GM12878 (cell line): ENCODE measurements at regions of chr14 and their contacts with region 1.

Region 1: GRCh38 chr14:88189417-88190191 is 133.5 kb downstream of the KCNK10 start:
- DNase-seq: peak; percentile 25
- ATAC-seq: peak; percentile 96
- H3K4me3 ChIP-seq: no peak overlapping the region
- H3K27ac ChIP-seq: no peak overlapping the region
- H3K4me1 ChIP-seq: peaks cover 10% of the 10 kb centered on the region; the same call in 1 of the 2 replicates
- H3K27me3 ChIP-seq: no peaks in the 10 kb centered on the region; a peak in 1 of 4 replicates
- CTCF ChIP-seq: peak; percentile 64 to 75 (median 69)
- EP300 ChIP-seq: no peak
- POLR2A ChIP-seq: no peak
- RAD21 ChIP-seq: peak; percentile 82

Region 2: GRCh38 chr14:87952307-87953094 is 237.1 kb before region 1 on chr14:
- CTCF ChIA-PET with region 1: interaction called, 10 read pairs
- POLR2A ChIA-PET with region 1: no interaction called
- RAD21 ChIA-PET with region 1: interaction called, 29 read pairs
- SMC1A ChIA-PET with region 1: interaction called, 49 read pairs
- in situ Hi-C with region 1: loop called (anchors 10 kb)
- intact Hi-C with region 1: loop called (anchors 5 kb)
- DNase-seq: no peak
- ATAC-seq: peak; percentile 88
- H3K4me3 ChIP-seq: no peak overlapping the region
- H3K27ac ChIP-seq: no peak overlapping the region; the same call in 1 of the 2 replicates
- H3K4me1 ChIP-seq: peaks cover 4% of the 10 kb centered on the region
- H3K27me3 ChIP-seq: no peaks in the 10 kb centered on the region
- CTCF ChIP-seq: no peak
- EP300 ChIP-seq: no peak
- POLR2A ChIP-seq: no peak
- RAD21 ChIP-seq: no peak

Region 3: GRCh38 chr14:88168498-88169165 is 21.0 kb before region 1 on chr14:
- CTCF ChIA-PET with region 1: interaction called, 17 read pairs
- POLR2A ChIA-PET with region 1: no interaction called
- RAD21 ChIA-PET with region 1: interaction called, 3 read pairs
- SMC1A ChIA-PET with region 1: interaction called, 3 read pairs
- in situ Hi-C with region 1: no loop called
- intact Hi-C with region 1: no loop called
- DNase-seq: no peak
- ATAC-seq: peak; percentile 98
- H3K4me3 ChIP-seq: no peak overlapping the region
- H3K27ac ChIP-seq: no peak overlapping the region
- H3K4me1 ChIP-seq: peaks cover 5% of the 10 kb centered on the region
- H3K27me3 ChIP-seq: no peaks in the 10 kb centered on the region
- CTCF ChIP-seq: peak; percentile 76 to 87 (median 76)
- EP300 ChIP-seq: no peak
- POLR2A ChIP-seq: no peak
- RAD21 ChIP-seq: peak; percentile 74

Region 4: DNA sequence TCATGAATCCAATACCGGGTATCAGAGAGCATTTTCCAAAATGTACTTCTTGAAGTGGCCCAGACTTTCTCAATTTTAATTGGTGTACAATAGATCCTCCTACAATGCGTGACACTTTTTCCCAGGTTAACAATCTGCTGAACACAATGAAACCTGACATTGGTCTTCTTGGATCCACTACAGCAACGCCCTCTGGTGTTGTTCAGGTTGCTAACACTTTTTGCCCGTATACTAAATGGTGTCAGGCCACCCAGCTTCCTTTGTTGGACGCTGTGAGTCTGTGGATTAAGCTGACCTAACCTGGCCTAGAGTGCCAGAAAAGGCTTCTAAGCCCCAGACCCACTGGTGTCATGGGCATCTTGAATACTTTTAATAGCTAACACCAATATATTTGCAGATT is 44.3 kb after region 1 on chr14:
- CTCF ChIA-PET with region 1: interaction called, 23 read pairs
- POLR2A ChIA-PET with region 1: no interaction called
- RAD21 ChIA-PET with region 1: interaction called, 9 read pairs
- SMC1A ChIA-PET with region 1: interaction called, 23 read pairs
- in situ Hi-C with region 1: no loop called
- intact Hi-C with region 1: loop called (anchors 2 kb)
- DNase-seq: no peak
- ATAC-seq: peak; percentile 64
- H3K4me3 ChIP-seq: no peak overlapping the region
- H3K27ac ChIP-seq: no peak overlapping the region
- H3K4me1 ChIP-seq: no peaks in the 10 kb centered on the region
- H3K27me3 ChIP-seq: no peaks in the 10 kb centered on the region
- CTCF ChIP-seq: peak; percentile 40 to 52 (median 48); a peak in 4 of 6 replicates
- EP300 ChIP-seq: no peak
- POLR2A ChIP-seq: no peak
- RAD21 ChIP-seq: peak; percentile 40; the same call in 1 of the 2 replicates

Region 5: DNA sequence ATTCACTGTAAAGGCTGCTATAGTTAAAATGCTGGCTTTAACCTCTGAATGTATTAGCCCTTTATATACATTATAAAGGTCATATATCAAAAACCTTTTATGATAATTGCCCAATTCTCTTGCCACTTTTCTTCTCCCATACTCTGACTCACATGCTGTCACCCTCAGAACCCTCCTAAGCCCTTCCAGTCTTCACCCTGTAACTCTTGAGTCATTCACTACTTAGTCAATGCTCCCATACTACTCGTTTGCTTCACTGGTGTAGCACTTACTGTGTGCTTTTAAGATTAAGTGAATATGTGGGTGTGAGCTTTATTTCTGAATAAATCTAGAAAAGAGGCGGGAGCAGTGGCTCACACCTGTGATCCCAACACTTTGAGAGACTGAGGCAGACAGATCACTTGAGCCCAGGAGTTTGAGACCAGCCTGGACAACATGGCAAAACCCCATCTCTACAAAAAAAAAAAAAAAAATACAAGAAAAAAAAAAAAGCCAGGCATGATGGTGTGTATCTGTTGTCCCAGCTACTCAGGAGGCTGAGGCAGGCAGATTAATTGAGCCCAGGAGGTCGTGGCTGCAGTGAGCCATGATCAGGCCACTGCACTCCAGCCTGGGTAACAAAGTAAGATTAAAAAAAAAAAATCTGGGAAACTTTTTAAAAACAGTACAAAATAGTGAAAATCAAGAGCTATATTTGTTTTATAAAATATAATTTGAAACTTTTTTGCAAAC is 233.5 kb after region 1 on chr14:
- CTCF ChIA-PET with region 1: no interaction called
- POLR2A ChIA-PET with region 1: no interaction called
- RAD21 ChIA-PET with region 1: no interaction called
- SMC1A ChIA-PET with region 1: no interaction called
- in situ Hi-C with region 1: no loop called
- intact Hi-C with region 1: no loop called
- DNase-seq: no peak
- ATAC-seq: no peak
- H3K4me3 ChIP-seq: no peak overlapping the region
- H3K27ac ChIP-seq: no peak overlapping the region
- H3K4me1 ChIP-seq: no peaks in the 10 kb centered on the region
- H3K27me3 ChIP-seq: no peaks in the 10 kb centered on the region
- CTCF ChIP-seq: no peak
- EP300 ChIP-seq: no peak
- POLR2A ChIP-seq: no peak
- RAD21 ChIP-seq: no peak

Region 6: GRCh38 chr14:88437658-88438057 is 248.1 kb after region 1 on chr14:
- CTCF ChIA-PET with region 1: interaction called, 10 read pairs
- POLR2A ChIA-PET with region 1: no interaction called
- RAD21 ChIA-PET with region 1: interaction called, 3 read pairs
- SMC1A ChIA-PET with region 1: no interaction called
- in situ Hi-C with region 1: no loop called
- intact Hi-C with region 1: no loop called
- DNase-seq: no peak
- ATAC-seq: no peak
- H3K4me3 ChIP-seq: no peak overlapping the region
- H3K27ac ChIP-seq: no peak overlapping the region
- H3K4me1 ChIP-seq: no peaks in the 10 kb centered on the region
- H3K27me3 ChIP-seq: no peaks in the 10 kb centered on the region
- CTCF ChIP-seq: peak in 1 of 3 experiments; percentile 14; a peak in 1 of 6 replicates
- EP300 ChIP-seq: no peak
- POLR2A ChIP-seq: no peak
- RAD21 ChIP-seq: no peak